Activated CD8-positive, alpha-beta T cell treated with anti-CD3 and anti-CD28 coated beads, Interleukin-2, amount 10 ng/mL, durations not matched to agents 7 days and 5 days (primary cell): ENCODE measurements at regions of chr5 and their contacts with region 1.

Region 1: DNA sequence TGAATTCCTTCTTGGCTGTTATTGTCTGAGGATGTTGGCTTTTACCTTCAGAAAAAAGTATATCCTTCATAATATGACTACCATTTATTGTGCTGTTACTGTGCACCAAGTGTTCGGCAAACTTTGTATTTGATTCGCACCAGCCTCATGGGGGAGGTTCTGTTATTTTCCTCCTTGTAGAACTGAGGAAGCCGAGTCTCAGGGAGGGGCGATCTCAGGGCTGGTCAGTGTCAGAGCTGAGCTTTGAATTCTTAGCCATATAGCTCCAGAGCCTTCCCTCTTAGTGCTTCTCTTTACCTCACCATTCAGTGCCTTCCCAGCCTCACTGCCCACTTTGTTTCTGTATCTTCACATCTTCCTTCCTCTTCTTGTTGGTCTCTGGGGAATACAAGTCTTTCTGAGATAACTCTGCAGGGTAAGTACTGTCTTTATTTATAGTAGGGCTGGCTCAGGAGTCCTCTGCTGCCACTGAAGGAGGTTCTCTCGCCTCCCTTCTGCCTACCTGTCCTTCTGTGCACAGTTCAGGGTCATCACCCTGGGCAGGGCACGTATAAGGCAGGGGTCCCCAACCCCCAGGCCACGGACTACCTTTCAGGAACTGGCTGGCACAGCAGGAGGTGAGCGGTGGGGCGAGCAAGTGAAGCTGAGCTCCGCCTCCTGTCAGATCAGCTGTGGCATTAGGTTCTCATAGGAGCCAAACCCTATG is 48.4 kb downstream of the GALNT10 start:
- DNase-seq: no peak
- ATAC-seq: no peak
- H3K4me3 Mint-ChIP-seq: no peak overlapping the region
- H3K27ac Mint-ChIP-seq: no peak overlapping the region
- H3K4me1 Mint-ChIP-seq: peaks cover 22% of the 10 kb centered on the region
- H3K27me3 Mint-ChIP-seq: no peaks in the 10 kb centered on the region

Region 2: GRCh38 chr5:154196955-154197652 is 41.8 kb before region 1 on chr5:
- CTCF ChIA-PET with region 1: interaction called, 41 read pairs
- POLR2A ChIA-PET with region 1: interaction called, 3 read pairs
- DNase-seq: no peak
- ATAC-seq: no peak
- H3K4me3 Mint-ChIP-seq: no peak overlapping the region
- H3K27ac Mint-ChIP-seq: peak overlapping the region; percentile 12
- H3K4me1 Mint-ChIP-seq: peaks cover 62% of the 10 kb centered on the region
- H3K27me3 Mint-ChIP-seq: peaks cover 2% of the 10 kb centered on the region

Region 3: DNA sequence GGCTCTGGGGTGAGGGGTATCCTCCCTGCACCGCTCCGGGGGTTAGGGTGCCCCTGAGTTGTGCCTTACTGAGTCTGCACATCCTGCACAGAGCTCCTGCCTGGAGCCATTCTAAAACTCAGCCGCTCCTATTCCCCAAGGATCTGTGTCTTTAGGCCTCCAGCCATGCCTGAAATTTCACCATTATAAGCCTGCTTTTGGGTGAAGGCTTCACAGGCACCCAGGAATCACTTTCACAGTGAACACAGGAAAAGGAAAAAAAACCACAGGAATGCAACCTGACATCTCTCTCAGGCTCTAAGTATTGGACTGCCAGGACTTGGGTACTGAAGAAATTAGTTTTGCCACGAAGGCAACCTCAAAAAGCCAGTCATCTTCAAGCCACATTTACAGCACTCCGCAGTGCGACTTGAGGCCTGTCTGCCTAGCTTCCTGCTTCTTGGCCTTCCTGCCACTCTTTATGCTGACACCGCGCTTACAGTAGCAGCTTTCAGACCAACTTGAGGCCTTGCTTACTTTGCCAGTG is 17.5 kb before region 1 on chr5:
- CTCF ChIA-PET with region 1: interaction called, 29 read pairs
- POLR2A ChIA-PET with region 1: no interaction called
- DNase-seq: peak; percentile 75
- ATAC-seq: peak; percentile 97
- H3K4me3 Mint-ChIP-seq: peak overlapping the region; percentile 1
- H3K27ac Mint-ChIP-seq: peak overlapping the region; percentile 75
- H3K4me1 Mint-ChIP-seq: peaks cover 39% of the 10 kb centered on the region
- H3K27me3 Mint-ChIP-seq: no peaks in the 10 kb centered on the region